ENCODE measurements at regions of chr22 and their contacts with region 1.

Region 1: DNA sequence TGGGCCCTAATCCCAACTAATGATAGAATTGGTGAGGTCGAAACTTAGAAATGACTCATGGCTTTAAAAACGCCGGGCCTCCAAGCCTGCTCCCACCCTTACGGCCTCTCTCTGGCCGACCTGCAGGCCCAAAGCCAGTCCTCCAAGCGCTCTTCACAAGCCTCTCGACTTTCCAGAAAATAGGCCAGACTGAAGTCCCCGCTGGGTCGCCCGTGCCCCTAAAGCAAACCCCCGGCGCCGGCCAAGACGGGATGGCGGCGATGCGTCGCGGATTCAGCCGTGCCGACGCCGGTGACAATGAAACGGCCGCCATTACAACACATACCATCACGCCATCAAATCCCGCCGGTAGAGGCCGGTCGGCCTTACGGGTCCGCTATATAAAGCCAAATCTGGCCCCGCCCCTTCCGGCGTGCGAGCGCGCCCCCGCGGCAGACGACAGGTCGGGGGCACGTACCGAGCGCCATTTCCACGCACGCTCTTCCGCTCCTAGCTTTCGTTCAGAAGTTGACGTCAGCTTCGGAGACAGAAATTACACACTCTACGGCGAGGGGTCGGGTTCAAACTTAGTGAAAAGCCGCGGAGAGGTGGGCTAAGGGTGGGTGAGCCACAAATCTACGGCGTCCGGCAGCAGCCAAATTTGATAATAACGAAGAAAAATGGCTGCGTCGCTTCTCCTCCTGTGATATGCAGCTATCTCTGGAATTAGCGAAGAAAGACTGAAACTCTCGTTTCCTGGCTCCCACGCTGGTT is at the start of gene RPL3:
- DNase-seq: peak; percentile 99
- ATAC-seq: peak; percentile 76
- H3K4me3 ChIP-seq: peak within 1 kb of the TSS; percentile 86 to 99
- H3K27ac ChIP-seq: peak within 1 kb of the TSS; percentile 100
- H3K4me1 ChIP-seq: peaks cover 36 to 51% of the 10 kb centered on the region in 2 experiments
- H3K27me3 ChIP-seq: no peaks in the 10 kb centered on the region
- CTCF ChIP-seq: no peak
- POLR2A ChIP-seq: peak; percentile 99
- RAD21 ChIP-seq: no peak
- total RNA-seq, gene RPL3: 2,966 TPM

Region 2: GRCh38 chr22:38069372-38070249 is 1249.8 kb before region 1 on chr22:
- CTCF ChIA-PET with region 1: no interaction called
- POLR2A ChIA-PET with region 1: no interaction called
- RAD21 ChIA-PET with region 1: no interaction called
- intact Hi-C with region 1: no loop called
- DNase-seq: no peak
- ATAC-seq: peak; percentile 67
- H3K4me3 ChIP-seq: no peak overlapping the region
- H3K27ac ChIP-seq: no peak overlapping the region
- H3K4me1 ChIP-seq: no peaks in the 10 kb centered on the region
- H3K27me3 ChIP-seq: no peaks in the 10 kb centered on the region
- CTCF ChIP-seq: peak in 2 of 3 experiments; percentile 38 to 54; a peak in 4 of 6 replicates
- POLR2A ChIP-seq: no peak
- RAD21 ChIP-seq: peak; percentile 54

Region 3: DNA sequence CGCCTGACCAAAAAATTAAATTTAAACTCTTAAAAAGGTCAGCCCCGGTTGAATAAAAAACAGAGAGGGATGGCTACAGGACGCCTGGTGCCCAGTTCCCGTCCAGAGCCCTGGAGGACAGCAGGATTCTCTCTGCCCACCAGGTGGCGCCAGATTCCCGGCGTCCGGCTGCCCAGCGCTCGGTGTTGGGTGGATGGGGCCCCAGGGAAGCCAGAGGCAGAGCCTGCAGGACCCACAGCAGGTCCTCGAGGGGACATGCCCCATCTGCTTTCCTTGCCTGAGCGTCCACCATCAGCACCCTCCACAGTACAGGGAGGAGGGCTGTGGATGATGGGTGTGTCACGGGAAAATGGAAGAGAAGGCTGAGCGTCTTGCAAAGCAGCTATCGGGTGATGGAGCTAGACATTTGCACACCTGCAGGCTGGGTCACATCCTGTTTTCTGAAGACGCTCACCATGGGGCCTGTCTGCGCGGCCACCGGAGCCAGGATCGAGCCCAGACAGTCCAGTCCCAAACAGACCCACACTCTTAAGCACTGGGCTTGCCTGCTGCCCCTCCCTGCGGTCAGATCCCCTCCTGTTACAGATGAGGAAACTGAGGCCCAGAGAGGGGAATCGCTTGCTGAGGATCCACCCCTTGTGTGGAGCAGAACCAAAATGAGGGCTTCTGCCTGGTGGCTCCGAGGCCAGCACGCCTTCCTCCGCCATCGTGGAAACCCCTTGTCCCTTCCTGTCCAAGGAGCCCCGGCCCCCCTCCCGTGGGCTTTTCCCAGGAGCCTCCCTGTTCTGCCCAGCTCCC is 148.4 kb before region 1 on chr22:
- CTCF ChIA-PET with region 1: interaction called, 16 read pairs
- POLR2A ChIA-PET with region 1: interaction called, 33 read pairs
- RAD21 ChIA-PET with region 1: interaction called in 1 of 2 experiments, 3 read pairs
- intact Hi-C with region 1: no loop called
- DNase-seq: peak; percentile 50
- ATAC-seq: peak; percentile 87
- H3K4me3 ChIP-seq: no peak overlapping the region
- H3K27ac ChIP-seq: no peak overlapping the region
- H3K4me1 ChIP-seq: peaks cover 28 to 46% of the 10 kb centered on the region in 2 experiments
- H3K27me3 ChIP-seq: no peaks in the 10 kb centered on the region
- CTCF ChIP-seq: peak; percentile 90 to 97 (median 92)
- POLR2A ChIP-seq: no peak
- RAD21 ChIP-seq: peak; percentile 100

Region 4: GRCh38 chr22:39275814-39276436 is 43.5 kb before region 1 on chr22:
- CTCF ChIA-PET with region 1: no interaction called
- POLR2A ChIA-PET with region 1: no interaction called
- RAD21 ChIA-PET with region 1: no interaction called
- intact Hi-C with region 1: no loop called
- DNase-seq: no peak
- ATAC-seq: peak; percentile 25; the same call in 1 of the 2 replicates
- H3K4me3 ChIP-seq: no peak overlapping the region
- H3K27ac ChIP-seq: no peak overlapping the region
- H3K4me1 ChIP-seq: no peaks in the 10 kb centered on the region
- H3K27me3 ChIP-seq: no peaks in the 10 kb centered on the region
- CTCF ChIP-seq: no peak
- POLR2A ChIP-seq: no peak
- RAD21 ChIP-seq: no peak

Region 5: GRCh38 chr22:39300186-39300830 is 19.1 kb before region 1 on chr22:
- CTCF ChIA-PET with region 1: no interaction called
- POLR2A ChIA-PET with region 1: interaction called, 17 read pairs
- RAD21 ChIA-PET with region 1: no interaction called
- intact Hi-C with region 1: no loop called
- DNase-seq: no peak
- ATAC-seq: peak; percentile 24; the same call in 1 of the 2 replicates
- H3K4me3 ChIP-seq: no peak overlapping the region
- H3K27ac ChIP-seq: no peak overlapping the region; the same call in 1 of the 2 replicates
- H3K4me1 ChIP-seq: peaks cover 48 to 66% of the 10 kb centered on the region in 2 experiments
- H3K27me3 ChIP-seq: no peaks in the 10 kb centered on the region
- CTCF ChIP-seq: no peak
- POLR2A ChIP-seq: no peak
- RAD21 ChIP-seq: no peak

Region 6: GRCh38 chr22:39332441-39333064 is 13.1 kb after region 1 on chr22:
- CTCF ChIA-PET with region 1: interaction called, 21 read pairs
- POLR2A ChIA-PET with region 1: interaction called, 88 read pairs
- RAD21 ChIA-PET with region 1: no interaction called
- intact Hi-C with region 1: no loop called
- DNase-seq: no peak
- ATAC-seq: no peak
- H3K4me3 ChIP-seq: no peak overlapping the region
- H3K27ac ChIP-seq: no peak overlapping the region
- H3K4me1 ChIP-seq: peaks cover 0 to 6% of the 10 kb centered on the region in 2 experiments; a peak in 2 of 4 replicates
- H3K27me3 ChIP-seq: no peaks in the 10 kb centered on the region
- CTCF ChIP-seq: no peak
- POLR2A ChIP-seq: no peak
- RAD21 ChIP-seq: no peak

Region 7: GRCh38 chr22:39395936-39396796 is 76.7 kb after region 1 on chr22:
- CTCF ChIA-PET with region 1: no interaction called
- POLR2A ChIA-PET with region 1: interaction called, 19 read pairs
- RAD21 ChIA-PET with region 1: interaction called in 1 of 2 experiments, 3 read pairs
- intact Hi-C with region 1: no loop called
- DNase-seq: no peak
- ATAC-seq: no peak
- H3K4me3 ChIP-seq: no peak overlapping the region
- H3K27ac ChIP-seq: no peak overlapping the region
- H3K4me1 ChIP-seq: peaks cover 0 to 11% of the 10 kb centered on the region in 2 experiments; a peak in 1 of 4 replicates
- H3K27me3 ChIP-seq: no peaks in the 10 kb centered on the region
- CTCF ChIP-seq: no peak
- POLR2A ChIP-seq: no peak
- RAD21 ChIP-seq: no peak

Region 8: DNA sequence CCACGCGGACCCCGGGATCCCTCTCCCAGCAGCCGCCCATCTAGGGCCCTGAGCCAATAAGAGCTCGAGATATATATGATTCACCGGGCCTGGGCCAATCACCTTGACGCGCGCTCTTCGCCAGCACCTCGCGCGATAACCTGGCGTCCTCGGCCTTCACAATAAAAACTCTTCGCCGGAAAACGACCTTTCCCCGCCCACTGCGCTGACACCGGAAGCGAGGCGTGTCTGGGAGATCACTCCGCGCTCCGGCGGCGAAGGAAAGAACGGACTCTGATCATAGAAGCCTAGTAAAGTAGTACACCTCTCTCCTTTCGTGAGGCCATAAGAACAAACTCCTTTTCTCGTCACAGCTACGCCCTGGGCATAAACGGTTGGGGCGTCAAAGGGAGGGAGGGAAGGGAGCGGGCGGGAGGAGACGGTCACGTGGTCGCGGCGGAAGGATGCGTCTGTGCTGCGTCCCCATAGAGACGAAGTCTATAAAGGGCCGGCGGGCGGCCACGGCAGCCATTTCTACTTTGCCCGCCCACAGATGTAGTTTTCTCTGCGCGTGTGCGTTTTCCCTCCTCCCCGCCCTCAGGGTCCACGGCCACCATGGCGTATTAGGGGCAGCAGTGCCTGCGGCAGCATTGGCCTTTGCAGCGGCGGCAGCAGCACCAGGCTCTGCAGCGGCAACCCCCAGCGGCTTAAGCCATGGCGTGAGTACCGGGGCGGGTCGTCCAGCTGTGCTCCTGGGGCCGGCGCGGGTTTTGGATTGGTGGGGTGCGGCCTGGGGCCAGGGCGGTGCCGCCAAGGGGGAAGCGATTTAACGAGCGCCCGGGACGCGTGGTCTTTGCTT is 200.8 kb after region 1 on chr22 and contains the start of gene ATF4:
- CTCF ChIA-PET with region 1: no interaction called
- POLR2A ChIA-PET with region 1: interaction called, 9 read pairs
- RAD21 ChIA-PET with region 1: no interaction called
- intact Hi-C with region 1: loop called (anchors 5 kb)
- DNase-seq: peak; percentile 99
- ATAC-seq: peak; percentile 81
- H3K4me3 ChIP-seq: peak within 1 kb of the TSS; percentile 85 to 92
- H3K27ac ChIP-seq: peak within 1 kb of the TSS; percentile 99
- H3K4me1 ChIP-seq: peaks cover 17 to 41% of the 10 kb centered on the region in 2 experiments
- H3K27me3 ChIP-seq: no peaks in the 10 kb centered on the region
- CTCF ChIP-seq: no peak
- POLR2A ChIP-seq: peak; percentile 98
- RAD21 ChIP-seq: no peak
- total RNA-seq, gene ATF4: 608 TPM